CD8-positive, alpha-beta T cell (primary cell): ENCODE measurements at regions of chr5 and their contacts with region 1.

Region 1: DNA sequence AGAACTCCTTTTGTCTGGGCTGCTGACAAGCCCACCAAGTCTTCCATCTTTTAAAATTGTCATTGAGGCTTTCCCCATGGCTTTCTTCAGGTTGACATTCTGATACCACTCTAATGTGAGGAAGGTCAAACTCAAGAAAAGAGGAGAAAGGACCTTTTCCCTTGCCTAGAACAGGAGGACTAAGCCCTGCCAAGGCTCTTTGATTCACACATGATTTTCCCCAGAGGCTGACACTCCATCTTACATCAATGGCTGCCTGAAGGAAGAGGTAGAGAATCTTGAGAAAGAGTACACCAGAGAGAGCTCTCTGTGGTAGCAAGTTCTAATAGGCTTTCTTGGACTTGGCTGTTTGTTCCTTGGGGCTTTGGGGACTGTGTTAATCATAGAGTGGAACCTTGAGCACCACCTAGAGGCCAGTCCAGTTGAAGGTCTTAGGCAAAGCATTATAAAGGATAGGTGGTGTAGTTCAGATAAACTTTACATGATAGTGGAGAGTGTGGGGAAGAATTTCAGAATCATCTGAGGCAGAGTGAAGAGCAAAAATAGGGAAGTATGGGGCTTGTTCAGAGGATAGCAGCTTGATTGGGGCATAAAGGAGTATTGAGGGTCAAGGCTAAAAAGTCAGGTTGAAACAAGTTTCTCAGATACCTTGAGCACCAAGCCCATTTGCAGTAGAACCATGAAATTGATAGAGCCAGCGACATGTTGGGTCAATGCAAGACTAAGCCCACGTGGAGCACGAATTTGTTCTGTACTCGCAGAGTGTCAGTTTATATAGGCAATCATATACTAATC is 36.7 kb downstream of the NDFIP1 start:
- DNase-seq: peak; percentile 18 to 76 (median 61)
- ATAC-seq: peak; percentile 78
- H3K4me3 ChIP-seq: no peak overlapping the region
- H3K4me3 Mint-ChIP-seq: no peak overlapping the region
- H3K27ac ChIP-seq: no peak overlapping the region
- H3K27ac Mint-ChIP-seq: no peak overlapping the region
- H3K4me1 ChIP-seq: no peaks in the 10 kb centered on the region
- H3K4me1 Mint-ChIP-seq: peaks cover 13% of the 10 kb centered on the region
- H3K27me3 ChIP-seq: no peaks in the 10 kb centered on the region
- H3K27me3 Mint-ChIP-seq: no peaks in the 10 kb centered on the region
- CTCF ChIP-seq: peak; percentile 63

Region 2: GRCh38 chr5:141512390-141512910 is 632.9 kb before region 1 on chr5:
- CTCF ChIA-PET with region 1: no interaction called
- POLR2A ChIA-PET with region 1: no interaction called
- intact Hi-C with region 1: no loop called
- DNase-seq: peak; percentile 68 to 91 (median 82)
- ATAC-seq: peak; percentile 51
- H3K4me3 ChIP-seq: peak overlapping the region; percentile 50 to 54
- H3K4me3 Mint-ChIP-seq: peak overlapping the region; percentile 87
- H3K27ac ChIP-seq: no peak overlapping the region
- H3K27ac Mint-ChIP-seq: no peak overlapping the region
- H3K4me1 ChIP-seq: peaks cover 21% of the 10 kb centered on the region
- H3K4me1 Mint-ChIP-seq: peaks cover 36% of the 10 kb centered on the region
- H3K27me3 ChIP-seq: no peaks in the 10 kb centered on the region
- H3K27me3 Mint-ChIP-seq: no peaks in the 10 kb centered on the region
- CTCF ChIP-seq: peak; percentile 83

Region 3: GRCh38 chr5:141992349-141992963 is 152.8 kb before region 1 on chr5:
- CTCF ChIA-PET with region 1: interaction called, 313 read pairs
- POLR2A ChIA-PET with region 1: interaction called, 3 read pairs
- intact Hi-C with region 1: loop called (anchors 1 kb)
- DNase-seq: peak; percentile 59 to 87 (median 81)
- ATAC-seq: peak; percentile 87
- H3K4me3 ChIP-seq: no peak overlapping the region
- H3K4me3 Mint-ChIP-seq: no peak overlapping the region
- H3K27ac ChIP-seq: no peak overlapping the region
- H3K27ac Mint-ChIP-seq: no peak overlapping the region
- H3K4me1 ChIP-seq: no peaks in the 10 kb centered on the region
- H3K4me1 Mint-ChIP-seq: peaks cover 5% of the 10 kb centered on the region
- H3K27me3 ChIP-seq: no peaks in the 10 kb centered on the region
- H3K27me3 Mint-ChIP-seq: no peaks in the 10 kb centered on the region
- CTCF ChIP-seq: peak; percentile 97

Region 4: GRCh38 chr5:142000703-142001484 is 144.4 kb before region 1 on chr5:
- CTCF ChIA-PET with region 1: interaction called, 313 read pairs
- POLR2A ChIA-PET with region 1: no interaction called
- intact Hi-C with region 1: no loop called
- DNase-seq: peak in 1 of 9 experiments; percentile 47
- ATAC-seq: peak; percentile 36
- H3K4me3 ChIP-seq: no peak overlapping the region
- H3K4me3 Mint-ChIP-seq: no peak overlapping the region
- H3K27ac ChIP-seq: no peak overlapping the region
- H3K27ac Mint-ChIP-seq: peak overlapping the region; percentile 71
- H3K4me1 ChIP-seq: peaks cover 16% of the 10 kb centered on the region
- H3K4me1 Mint-ChIP-seq: peaks cover 20% of the 10 kb centered on the region
- H3K27me3 ChIP-seq: no peaks in the 10 kb centered on the region
- H3K27me3 Mint-ChIP-seq: no peaks in the 10 kb centered on the region
- CTCF ChIP-seq: no peak

Region 5: DNA sequence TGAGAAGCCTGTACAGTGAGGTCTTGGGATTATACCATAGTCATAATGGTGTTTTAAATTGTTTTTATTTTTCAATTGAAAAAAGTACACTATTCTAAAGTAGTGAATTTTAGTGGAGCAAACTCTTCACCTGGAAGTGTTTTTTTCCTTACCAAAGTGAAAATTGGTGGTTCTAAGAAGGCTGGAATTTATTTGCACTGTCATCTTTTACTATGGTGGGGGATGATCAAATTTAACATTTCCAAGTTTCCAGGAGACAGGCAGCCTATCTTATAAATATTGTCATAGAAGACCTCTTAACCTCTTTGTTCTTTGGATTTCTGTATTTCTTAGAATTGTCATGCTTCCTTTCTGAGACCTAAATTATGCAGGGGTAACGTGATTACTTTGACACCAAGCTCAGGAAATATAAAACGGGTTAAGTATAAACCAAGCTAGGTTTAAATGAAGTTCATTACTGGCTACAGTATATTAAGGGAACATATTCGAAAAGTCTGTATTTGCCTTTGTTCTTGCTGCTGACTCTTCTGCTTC is 16.6 kb before region 1 on chr5:
- CTCF ChIA-PET with region 1: interaction called, 11 read pairs
- POLR2A ChIA-PET with region 1: interaction called, 3 read pairs
- intact Hi-C with region 1: no loop called
- DNase-seq: peak in 2 of 9 experiments; percentile 17 to 44
- ATAC-seq: peak; percentile 41
- H3K4me3 ChIP-seq: peak overlapping the region in 1 of 2 experiments; percentile 20
- H3K4me3 Mint-ChIP-seq: peak overlapping the region; percentile 8
- H3K27ac ChIP-seq: no peak overlapping the region
- H3K27ac Mint-ChIP-seq: peak overlapping the region; percentile 58
- H3K4me1 ChIP-seq: peaks cover 64% of the 10 kb centered on the region
- H3K4me1 Mint-ChIP-seq: peaks cover 75% of the 10 kb centered on the region
- H3K27me3 ChIP-seq: no peaks in the 10 kb centered on the region
- H3K27me3 Mint-ChIP-seq: no peaks in the 10 kb centered on the region
- CTCF ChIP-seq: no peak